Cardiac septum (tissue), 1 donor: ENCODE measurements at regions of chr17 and their contacts with region 1.

Region 1: DNA sequence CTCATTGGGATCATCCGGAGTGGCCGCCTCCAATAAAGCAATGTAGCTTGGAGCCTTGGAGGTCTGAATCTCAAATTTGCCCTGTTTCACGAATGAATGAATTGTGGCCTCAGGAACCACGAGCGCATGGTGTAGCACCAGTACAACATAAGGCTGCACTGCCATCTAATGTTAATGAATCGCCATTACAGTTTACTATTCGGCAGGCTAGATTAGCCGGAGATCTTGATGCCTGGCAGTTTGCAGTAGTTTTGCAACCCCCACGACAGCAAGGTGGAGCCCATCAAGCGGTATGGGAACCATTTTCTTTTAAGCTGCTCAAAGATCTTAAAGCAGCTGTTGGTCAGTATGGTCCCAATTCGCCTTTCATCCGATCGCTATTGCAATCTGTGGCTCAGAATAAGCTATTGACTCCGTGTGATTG is 18.8 kb downstream of the ALOX15B start:
- DNase-seq: peak; percentile 64

Region 2: DNA sequence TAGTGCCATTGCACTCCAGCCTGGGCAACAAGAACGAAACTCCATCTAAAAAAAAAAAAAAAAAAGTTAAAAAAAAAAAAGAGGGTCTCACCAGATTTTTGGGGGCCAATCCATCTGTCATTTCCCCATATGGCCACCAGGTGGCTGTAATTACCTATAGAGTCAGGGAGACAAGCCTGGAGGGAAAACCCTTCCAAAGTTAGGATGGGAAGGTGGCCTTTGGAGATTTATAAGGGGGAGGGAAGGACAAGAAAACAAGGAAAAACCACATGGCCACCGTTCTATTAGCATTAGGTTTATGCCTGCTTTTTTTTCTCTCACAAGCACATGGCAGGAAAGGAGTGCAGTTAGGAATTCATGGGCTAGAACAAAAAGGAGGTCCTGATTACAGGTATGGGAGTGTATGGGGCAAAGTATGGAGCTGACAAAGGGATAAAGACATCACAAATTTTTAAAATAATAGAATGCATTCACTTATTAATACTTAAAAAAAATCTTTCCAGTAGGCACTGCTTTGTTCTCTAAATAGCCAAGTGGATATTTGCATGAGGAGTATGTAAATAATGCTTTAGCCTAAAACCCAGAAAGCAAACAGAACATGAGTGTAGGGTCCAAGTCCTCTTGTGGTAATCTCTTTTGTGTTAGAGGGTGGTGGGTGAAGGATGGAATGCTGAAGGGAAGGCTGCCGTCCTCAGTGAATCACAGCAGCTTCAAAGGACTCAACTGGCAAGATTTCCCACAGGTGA is 194.8 kb before region 1 on chr17:
- intact Hi-C with region 1: loop called (anchors 2 kb)
- DNase-seq: no peak

Region 3: GRCh38 chr17:7887482-7888183 is 170.1 kb before region 1 on chr17:
- intact Hi-C with region 1: no loop called
- DNase-seq: peak; percentile 95

Region 4: DNA sequence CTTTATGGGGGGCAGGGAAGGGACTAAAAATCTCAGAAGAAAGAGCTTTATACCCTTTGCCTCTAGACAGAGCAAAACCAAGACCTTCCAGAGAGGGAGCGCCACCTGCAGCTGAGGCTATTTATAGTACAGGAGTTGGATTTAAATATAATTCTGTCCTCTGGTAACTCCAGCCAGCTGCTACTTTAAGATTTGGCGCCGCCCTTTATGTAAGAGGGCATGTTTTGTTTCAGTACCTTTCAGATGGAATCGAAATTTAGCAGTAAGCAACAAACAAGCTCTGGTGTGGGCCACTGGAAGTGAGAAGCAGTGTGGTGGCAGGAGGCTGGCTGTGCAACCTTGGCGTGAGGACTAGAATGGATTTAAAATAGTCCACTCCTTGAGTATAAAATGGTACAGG is 60.5 kb before region 1 on chr17:
- intact Hi-C with region 1: no loop called
- DNase-seq: no peak

Region 5: DNA sequence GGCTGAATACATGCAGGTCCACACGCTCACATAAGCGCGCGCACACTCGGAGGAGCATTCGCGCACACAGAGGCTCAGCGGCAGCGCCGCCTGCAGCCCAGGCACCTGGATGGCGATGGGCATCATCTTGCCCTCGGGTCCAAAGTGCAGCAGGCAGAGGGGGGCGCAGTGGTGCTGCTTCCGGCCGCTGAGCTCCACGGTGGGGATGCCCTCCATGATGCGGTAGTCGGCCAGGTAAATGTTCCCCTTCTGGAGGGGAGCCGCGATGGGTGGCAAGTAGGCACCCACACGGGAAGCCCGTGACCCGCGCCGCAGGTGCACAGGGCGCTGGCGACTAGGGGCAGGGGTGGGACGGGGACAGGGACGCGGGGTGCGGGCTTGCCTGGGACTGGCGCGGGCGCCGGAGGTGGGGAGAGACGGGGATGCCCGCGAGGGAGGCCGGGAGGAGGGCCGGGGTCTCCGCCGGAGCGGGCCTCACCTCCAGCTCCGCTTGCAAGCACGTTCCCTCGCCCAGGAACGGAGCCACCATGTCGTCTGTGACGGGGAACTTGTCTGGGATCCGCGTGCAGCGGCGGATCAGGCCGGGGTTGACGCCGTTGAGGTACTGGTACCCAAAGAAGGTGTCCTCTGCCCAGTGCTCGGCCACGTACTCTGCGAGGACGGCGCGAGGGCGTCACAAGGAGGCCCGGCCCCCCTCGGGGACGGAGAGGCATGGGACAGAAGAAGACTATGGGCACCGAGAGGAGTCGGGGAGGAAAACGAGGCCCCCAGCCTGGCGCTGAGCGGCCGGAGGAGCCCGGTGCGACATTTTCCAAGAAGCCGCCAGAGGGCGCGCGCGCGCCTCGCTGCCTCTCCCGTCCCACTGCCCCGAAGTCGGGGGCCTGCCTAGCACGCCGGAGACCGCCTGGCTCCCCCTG is 21.8 kb after region 1 on chr17:
- intact Hi-C with region 1: no loop called
- DNase-seq: peak; percentile 88

Region 6: GRCh38 chr17:8109661-8110464 is 52.2 kb after region 1 on chr17:
- intact Hi-C with region 1: loop called (anchors 5 kb)
- DNase-seq: no peak